ENCODE measurements at regions of chr5 and their contacts with region 1.

Region 1: DNA sequence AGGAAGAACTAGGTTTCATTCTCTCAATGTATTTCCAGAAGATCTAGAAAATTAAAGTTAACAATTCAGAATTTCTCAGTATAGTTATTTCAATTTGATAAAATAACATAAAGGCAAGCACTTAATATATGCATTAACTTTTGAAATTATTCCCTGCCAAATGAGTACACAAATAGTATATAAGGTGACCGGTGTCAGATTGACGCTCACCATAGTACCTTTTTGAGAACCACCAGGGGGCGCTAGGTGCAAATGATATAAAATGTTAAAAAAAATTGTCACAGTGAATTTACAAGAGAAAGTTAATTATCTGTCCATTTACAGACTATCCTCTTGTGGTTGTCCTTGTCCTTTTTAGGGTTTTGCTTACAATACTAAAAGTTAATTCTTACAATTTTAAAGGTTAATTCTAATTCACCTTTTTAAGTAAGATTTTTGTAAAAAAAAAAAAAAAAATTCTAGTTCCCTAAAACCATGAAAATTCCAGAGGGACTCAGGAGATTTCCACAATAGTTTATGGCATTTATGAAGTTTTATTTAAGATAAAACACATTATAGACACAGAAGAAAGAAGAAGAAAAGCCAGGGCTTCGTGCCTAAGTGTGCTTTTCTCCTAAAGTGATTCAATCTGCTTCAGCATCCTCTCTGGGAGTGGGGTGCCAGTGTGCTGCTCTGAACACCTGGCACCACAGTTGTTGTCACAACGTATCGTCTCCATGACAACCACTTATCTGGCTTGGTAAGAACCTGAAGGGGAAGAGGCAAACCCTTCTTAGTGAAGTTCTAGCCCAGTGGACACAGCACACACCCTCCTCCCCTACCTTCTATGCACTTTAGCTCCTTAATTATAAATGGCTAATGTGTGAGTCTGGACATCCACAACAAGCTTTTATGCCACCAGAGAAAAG is 1.7 kb downstream of the ADAMTS16 start:
- DNase-seq: peak in 2 of 6 donors; percentile 27 to 55
- ATAC-seq: peak; percentile 53 to 81 (median 70)
- H3K4me3 ChIP-seq: peak overlapping the region in 1 of 4 donors; percentile 37
- H3K27ac ChIP-seq: no peak overlapping the region
- H3K4me1 ChIP-seq: peaks cover 0 to 5% (median 3%) of the 10 kb centered on the region in 3 donors
- H3K27me3 ChIP-seq: peaks cover 0 to 13% (median 5%) of the 10 kb centered on the region in 4 donors
- CTCF ChIP-seq: peak; percentile 70 to 82 (median 78)

Region 2: DNA sequence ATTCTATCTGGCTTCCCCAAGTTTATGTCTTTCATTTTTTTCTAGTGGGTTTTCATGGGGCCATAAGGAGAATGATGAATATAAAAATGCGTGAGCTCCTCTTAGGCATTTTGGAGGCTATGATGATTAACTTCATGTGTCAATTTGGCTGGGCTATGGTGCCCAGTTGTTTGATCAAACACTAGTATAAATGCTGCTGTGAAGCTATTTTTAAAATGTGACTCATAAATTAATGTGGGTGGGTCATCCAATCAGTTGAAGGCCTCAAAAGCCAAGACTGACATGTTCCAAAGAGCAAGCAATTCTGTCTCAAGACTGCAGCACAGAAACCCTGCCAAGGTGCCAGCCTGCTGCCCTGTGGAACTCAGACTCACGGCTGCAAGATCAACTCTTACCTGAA is 256.2 kb after region 1 on chr5:
- intact Hi-C with region 1: loop called in 1 of 3 experiments (anchors 5 kb)
- DNase-seq: no peak
- ATAC-seq: no peak
- H3K4me3 ChIP-seq: no peak overlapping the region
- H3K27ac ChIP-seq: no peak overlapping the region
- H3K4me1 ChIP-seq: no peaks in the 10 kb centered on the region
- H3K27me3 ChIP-seq: no peaks in the 10 kb centered on the region
- CTCF ChIP-seq: no peak